ENCODE measurements at regions of chr17 and their contacts with region 1.

Region 1: DNA sequence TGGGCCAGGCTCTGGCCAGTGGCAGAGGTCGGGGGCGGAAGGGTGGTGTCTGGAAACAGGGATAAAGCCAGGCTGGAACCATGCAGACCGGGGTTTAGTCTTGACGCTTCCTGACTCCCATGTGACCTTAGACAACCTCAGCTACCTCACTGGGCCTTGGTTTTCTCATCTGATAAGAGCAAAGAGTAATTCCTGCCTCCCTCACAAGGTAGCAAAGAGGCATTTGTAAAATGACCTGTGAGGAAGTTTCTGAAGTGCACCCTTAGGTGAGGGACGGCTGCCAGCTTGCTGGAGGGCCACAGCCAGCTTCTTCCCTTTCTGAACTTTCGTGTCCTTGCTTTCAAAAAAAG is 78.0 kb upstream of the TMEM97 start:
- DNase-seq: no peak
- ATAC-seq: peak in 1 of 2 donors; percentile 66
- H3K4me3 ChIP-seq: no peak overlapping the region
- H3K27ac ChIP-seq: no peak overlapping the region
- H3K4me1 ChIP-seq: no peaks in the 10 kb centered on the region
- H3K27me3 ChIP-seq: no peaks in the 10 kb centered on the region

Region 2: DNA sequence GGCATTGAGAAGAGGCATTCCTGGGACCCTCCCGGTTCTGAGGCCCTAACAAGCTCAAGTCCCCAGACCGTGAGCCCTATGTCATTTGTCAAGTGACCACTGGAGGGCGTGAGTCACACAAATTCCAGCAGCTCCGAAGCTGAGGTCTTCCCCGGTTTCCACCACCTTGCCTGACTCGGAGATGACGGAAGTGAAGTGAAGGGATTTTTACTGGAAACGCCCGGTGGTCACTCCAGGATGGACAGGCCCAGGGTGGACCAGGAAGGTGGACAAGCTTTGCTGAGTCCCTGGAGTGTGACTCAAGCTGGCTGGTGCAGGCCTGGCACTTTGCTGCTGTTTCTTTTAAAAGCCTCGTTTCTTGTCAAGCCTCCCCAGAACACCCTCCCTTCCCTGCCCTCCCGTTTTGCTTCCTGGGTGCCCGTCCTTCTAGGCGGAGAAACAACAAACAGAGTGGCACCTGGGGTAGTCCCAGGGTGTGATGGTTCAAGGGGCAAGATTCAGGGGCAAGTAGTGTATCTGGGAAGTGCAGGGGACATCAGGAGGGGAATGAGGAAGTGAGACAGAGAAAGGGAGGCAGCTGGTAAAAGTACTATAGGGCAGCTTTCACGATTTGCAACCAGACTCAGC is 435.3 kb before region 1 on chr17:
- intact Hi-C with region 1: loop called in 1 of 4 experiments (anchors 5 kb)
- DNase-seq: peak; percentile 81 to 88 (median 84)
- ATAC-seq: peak; percentile 90 to 95
- H3K4me3 ChIP-seq: peak overlapping the region; percentile 21
- H3K27ac ChIP-seq: no peak overlapping the region
- H3K4me1 ChIP-seq: peaks cover 2% of the 10 kb centered on the region
- H3K27me3 ChIP-seq: no peaks in the 10 kb centered on the region

Region 3: GRCh38 chr17:28457890-28458289 is 216.9 kb after region 1 on chr17:
- intact Hi-C with region 1: no loop called
- DNase-seq: no peak
- ATAC-seq: no peak
- H3K4me3 ChIP-seq: no peak overlapping the region
- H3K27ac ChIP-seq: no peak overlapping the region
- H3K4me1 ChIP-seq: no peaks in the 10 kb centered on the region
- H3K27me3 ChIP-seq: no peaks in the 10 kb centered on the region